ENCODE measurements at regions of chr12 and their contacts with region 1.

Region 1: DNA sequence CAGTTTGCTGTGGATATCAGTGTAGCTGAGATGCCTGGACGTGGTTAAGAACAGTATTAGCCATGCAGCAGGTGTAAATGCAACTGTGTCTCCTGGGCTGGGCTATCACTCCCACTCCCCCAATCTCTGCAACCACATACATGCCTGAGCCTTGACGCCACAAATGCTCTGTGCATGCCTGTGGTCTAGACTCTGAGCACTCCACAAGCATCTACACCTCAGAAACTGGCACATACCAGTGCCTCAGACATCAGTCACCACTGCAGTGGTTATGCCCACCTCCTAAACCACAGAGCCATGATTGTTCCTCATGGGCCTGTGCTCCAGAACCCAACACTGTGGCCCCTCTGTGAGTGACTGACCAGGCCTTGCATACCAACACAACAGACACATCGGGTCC is 226.8 kb upstream of the ALG10 start:
- ATAC-seq: no peak
- H3K4me3 ChIP-seq: no peak overlapping the region
- H3K27ac ChIP-seq: no peak overlapping the region
- H3K4me1 ChIP-seq: no peaks in the 10 kb centered on the region

Region 2: GRCh38 chr12:33703221-33703620 is 92.3 kb before region 1 on chr12:
- in situ Hi-C with region 1: no loop called
- ATAC-seq: no peak
- H3K4me3 ChIP-seq: no peak overlapping the region
- H3K27ac ChIP-seq: no peak overlapping the region
- H3K4me1 ChIP-seq: no peaks in the 10 kb centered on the region

Region 3: DNA sequence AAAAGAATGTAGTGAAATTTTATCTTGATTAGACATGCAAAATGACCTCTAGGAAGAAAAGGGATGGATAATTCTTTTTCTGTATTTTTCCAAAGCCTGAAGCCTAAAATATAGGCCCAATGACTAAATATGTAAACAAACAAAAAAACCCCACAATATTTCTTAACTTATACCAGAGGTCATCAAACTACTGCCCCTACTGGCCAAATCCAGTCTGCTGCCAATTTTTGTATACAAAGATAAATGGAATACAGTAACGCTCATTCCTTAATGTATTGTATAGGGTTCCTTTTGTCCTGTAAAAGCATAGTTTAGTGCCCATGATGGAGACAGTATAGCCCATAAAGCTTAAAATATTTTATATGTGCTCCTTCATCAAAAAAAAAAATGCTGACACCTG is 81.1 kb after region 1 on chr12:
- in situ Hi-C with region 1: loop called in 1 of 9 experiments (anchors 25 kb)
- ATAC-seq: no peak
- H3K4me3 ChIP-seq: no peak overlapping the region
- H3K27ac ChIP-seq: no peak overlapping the region
- H3K4me1 ChIP-seq: no peaks in the 10 kb centered on the region

Region 4: DNA sequence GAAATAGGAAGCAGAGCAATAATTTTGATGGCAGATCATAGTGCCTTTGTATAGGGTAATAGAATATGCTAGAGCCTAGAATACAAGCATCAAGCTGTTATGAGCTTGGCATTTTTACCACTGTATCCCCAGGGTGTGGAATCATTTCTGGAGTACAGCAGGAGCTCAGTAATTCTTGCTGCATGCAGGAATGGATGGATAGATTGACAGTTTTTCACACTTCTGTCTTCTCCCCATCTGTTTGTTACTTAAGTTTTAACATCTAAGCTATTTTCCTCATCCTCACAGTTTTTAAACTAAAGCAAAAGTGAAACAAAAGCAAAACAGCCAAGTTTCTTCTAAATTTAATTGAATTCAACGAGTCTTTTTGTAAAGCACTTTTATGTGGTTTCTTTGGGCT is 259.4 kb after region 1 on chr12:
- in situ Hi-C with region 1: no loop called
- ATAC-seq: no peak
- H3K4me3 ChIP-seq: no peak overlapping the region
- H3K27ac ChIP-seq: no peak overlapping the region
- H3K4me1 ChIP-seq: no peaks in the 10 kb centered on the region

Region 5: DNA sequence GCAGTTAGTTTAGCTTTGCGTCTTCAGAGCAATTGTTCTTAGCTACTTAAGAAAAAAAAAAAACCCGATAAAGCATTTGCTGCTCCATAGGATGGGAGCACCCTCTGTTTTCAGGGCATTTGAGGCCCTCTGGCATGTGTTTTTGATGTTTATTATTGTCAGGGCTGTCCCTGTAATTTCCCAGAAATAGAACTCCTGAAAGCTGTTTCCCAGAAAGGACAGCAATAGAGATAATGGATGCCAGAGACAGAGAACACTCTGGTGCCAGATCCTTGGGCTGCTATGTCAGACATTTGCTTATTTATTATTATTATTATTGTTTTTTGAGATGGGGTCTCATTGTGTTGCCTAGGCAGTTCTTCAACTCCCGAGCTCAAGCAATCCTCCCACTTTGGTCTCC is 428.1 kb after region 1 on chr12:
- in situ Hi-C with region 1: no loop called
- ATAC-seq: no peak
- H3K4me3 ChIP-seq: no peak overlapping the region
- H3K27ac ChIP-seq: no peak overlapping the region
- H3K4me1 ChIP-seq: no peaks in the 10 kb centered on the region

Region 6: DNA sequence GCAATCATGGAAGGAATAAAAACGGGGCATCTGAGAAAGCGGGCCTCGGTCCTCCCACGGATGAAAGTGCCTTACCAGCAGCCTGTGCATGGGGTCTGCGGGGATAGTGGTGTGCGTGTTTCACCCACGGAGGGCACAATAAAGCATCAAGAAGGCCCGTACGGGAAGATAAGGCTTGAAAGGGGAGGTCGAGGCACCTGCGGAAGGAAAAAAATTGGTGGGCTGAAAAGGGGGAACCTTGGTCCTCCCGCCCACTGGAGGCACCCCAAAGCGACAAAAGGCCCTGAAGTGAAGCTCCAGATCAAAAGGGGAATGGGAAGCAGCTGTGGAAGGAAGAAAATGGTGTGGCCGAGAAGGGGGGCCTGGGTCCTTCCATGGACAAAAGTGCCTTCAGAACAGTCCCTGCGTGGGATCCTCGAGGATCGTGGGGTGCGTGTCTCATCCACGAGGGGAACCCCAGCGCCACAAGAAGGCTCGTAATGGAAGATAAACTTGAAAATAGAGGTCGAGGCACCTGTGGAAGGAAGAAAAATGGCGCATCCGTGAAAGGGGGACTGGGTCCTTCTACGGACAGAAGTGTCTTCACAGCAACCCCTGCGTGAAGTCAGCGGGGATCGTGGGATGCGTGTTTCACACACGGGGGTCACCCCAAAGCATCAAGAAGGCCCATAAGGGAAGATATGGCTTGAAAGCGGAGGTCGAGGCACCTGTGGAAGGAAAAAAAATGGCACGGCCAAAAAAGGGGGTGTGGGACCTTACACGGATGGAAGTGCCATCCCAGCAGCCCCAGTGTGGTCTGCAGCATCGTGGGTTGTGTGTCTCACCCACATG is 503.6 kb after region 1 on chr12:
- in situ Hi-C with region 1: no loop called
- ATAC-seq: no peak
- H3K4me3 ChIP-seq: no peak overlapping the region
- H3K27ac ChIP-seq: no peak overlapping the region
- H3K4me1 ChIP-seq: no peaks in the 10 kb centered on the region